Adrenal gland (tissue), 19 donors: ENCODE measurements at regions of chr3 and their contacts with region 1.

Region 1: DNA sequence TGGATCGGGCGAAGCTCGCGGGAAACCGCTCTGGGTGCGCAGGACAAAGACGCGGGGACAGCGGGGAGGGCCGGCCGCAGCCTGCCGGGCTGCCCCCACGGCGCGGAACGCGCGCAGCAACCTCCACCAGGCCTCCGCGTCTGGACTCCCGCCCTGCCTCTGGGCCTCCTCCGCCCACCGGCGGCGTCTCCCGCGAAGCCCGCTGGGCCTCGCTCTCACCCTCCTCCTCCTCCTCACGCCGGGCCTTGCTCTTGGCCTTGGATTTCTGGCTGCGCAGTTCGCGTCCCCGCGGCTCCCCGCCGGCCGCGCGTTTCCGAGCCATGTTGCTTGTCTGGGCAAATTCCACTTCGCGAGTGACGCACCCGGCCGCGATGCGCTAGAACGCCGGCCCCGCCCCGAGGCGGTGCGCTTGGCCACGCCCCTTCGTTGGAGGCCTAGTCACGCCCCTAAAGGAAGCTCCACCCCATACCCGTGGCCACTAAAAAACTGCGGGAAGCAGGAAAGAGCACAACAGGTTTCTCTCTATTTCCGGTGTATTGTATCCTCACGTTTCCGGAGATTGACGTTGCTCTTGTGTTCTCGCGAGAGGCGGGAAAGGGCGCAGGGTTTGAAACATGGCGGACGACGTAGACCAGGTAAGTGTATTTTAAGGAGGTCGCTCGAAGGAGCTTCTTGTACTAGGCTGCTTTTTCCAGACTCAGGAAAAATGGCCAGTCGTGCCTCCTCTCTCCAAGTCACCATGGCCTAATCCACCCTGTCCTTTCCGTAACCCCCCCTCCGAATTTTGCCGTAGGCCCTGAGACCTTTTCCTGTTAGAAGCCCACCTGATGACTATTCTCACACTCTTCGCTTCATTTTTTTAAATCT is at the starts of genes LSM3 and XPC:
- DNase-seq: peak; percentile 95 to 99 (median 98)
- H3K4me3 ChIP-seq: peak within 1 kb of the TSS; percentile 57 to 96 (median 79)
- H3K27ac ChIP-seq: peak within 1 kb of the TSS; percentile 90 to 97 (median 96)
- H3K4me1 ChIP-seq: peaks cover 25 to 44% of the 10 kb centered on the region in 2 donors
- H3K27me3 ChIP-seq: no peaks in the 10 kb centered on the region
- CTCF ChIP-seq: peak in 1 of 6 experiments; percentile 11
- POLR2A ChIP-seq: peak; percentile 88 to 93
- total RNA-seq, gene LSM3: 5.8 to 16.0 (median 9.8) TPM
- total RNA-seq, gene XPC: 15.6 to 66.5 (median 32.8) TPM

Region 2: GRCh38 chr3:14124615-14125190 is 53.8 kb before region 1 on chr3 and contains the starts of genes CHCHD4 and TMEM43:
- intact Hi-C with region 1: loop called in 1 of 2 experiments (anchors 10 kb)
- DNase-seq: peak; percentile 99 to 100 (median 99)
- H3K4me3 ChIP-seq: peak within 1 kb of the TSS; percentile 56 to 76 (median 66)
- H3K27ac ChIP-seq: peak within 1 kb of the TSS; percentile 88 to 96 (median 91)
- H3K4me1 ChIP-seq: peaks cover 15 to 40% of the 10 kb centered on the region in 2 donors
- H3K27me3 ChIP-seq: no peaks in the 10 kb centered on the region
- CTCF ChIP-seq: no peak
- POLR2A ChIP-seq: peak; percentile 68 to 89
- total RNA-seq, gene CHCHD4: 10.2 to 34.6 (median 18.2) TPM
- total RNA-seq, gene TMEM43: 51.7 to 79.1 (median 58.0) TPM

Region 3: DNA sequence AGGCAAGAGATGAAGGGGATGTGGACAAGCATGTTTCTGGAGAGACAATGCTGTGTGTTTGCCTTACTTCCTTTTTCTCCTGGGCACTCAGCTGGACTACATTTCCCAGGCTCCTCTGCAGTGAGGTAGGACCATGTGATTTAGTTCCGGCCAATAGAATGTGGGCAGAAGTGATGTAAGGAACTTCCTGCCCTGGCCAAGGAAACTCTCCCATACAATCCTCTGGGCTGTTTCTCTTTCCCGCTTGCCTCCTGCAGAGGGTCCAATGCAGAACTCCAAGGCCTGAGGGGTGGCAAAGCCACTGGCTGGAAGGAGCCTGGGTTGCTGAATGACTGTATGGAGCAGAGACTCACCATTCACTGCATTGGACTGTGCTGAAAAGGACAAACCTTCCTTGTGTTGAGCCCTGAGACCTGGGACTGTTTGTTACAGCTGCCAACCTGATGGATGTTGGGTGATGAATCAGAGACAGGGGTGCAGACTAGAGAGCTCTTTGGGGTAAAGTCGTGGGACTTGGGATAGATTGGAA is 141.2 kb after region 1 on chr3:
- intact Hi-C with region 1: no loop called
- DNase-seq: peak in 4 of 7 donors; percentile 31 to 56 (median 44)
- H3K4me3 ChIP-seq: no peak overlapping the region
- H3K27ac ChIP-seq: no peak overlapping the region
- H3K4me1 ChIP-seq: peaks cover 0 to 8% of the 10 kb centered on the region in 2 donors
- H3K27me3 ChIP-seq: no peaks in the 10 kb centered on the region
- CTCF ChIP-seq: no peak
- POLR2A ChIP-seq: no peak